Cardiac septum (tissue), 1 donor: ENCODE measurements at regions of chr18 and their contacts with region 1.

Region 1: DNA sequence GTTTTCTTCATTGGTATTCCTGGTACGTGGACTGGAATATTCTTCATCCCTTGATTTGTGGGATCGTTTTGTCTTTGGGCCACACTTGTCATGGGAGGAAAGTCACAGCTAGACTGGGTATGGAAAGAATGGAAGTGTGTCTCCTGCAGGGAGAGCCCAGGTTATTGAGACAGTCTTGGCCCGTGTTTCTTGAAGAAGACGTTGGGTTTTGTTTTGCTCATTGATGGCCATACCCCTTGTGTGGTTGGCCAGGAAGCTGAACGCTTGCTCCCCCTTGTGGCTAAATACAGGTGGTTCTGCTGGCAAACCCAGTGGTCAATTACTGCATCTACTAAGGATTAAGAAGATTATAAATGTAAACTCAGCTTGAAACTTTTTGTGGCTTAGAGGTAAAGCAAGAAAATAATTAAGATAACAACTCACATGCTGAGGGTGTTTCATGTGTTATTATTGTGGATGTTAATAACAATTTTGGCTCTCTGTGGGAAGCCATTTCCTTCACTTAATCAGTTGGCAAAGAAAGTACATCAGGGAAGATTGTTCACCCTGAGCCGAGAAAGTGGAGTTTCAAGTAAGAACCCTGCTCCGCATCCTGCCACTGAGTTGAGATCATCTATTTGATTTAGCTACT is 91.8 kb downstream of the NEDD4L start:
- DNase-seq: no peak

Region 2: DNA sequence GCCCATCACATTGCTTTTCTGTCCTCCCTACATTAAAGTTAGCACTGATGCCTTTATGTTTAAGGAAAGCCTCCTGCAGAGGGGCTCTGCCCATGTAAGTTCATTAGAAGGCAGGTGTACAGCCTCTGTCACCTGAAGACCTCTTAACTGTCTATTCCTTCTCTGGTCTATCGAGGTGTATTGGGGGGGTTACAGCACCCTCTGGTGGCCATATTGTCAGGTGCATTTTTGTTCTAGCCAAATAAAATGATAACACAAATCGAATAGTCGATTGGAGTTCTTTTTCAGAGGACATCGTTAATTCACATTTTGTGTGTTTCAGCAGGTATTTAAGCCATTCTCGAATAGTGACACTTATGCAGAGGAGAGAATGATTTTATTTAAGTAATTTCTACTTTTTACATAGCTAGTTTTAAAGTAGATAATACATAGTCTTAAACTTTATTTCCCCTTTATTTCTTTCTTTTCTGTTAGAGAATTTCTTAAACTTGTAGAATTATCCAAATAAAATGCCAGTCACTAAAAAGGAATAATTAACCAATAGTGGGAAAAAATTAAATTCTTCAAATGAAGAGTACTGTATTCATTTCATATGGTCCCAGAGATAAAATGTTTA is 45.0 kb after region 1 on chr18:
- intact Hi-C with region 1: loop called (anchors 5 kb)
- DNase-seq: no peak

Region 3: GRCh38 chr18:58231930-58232329 is 96.1 kb after region 1 on chr18:
- intact Hi-C with region 1: loop called (anchors 5 kb)
- DNase-seq: no peak